Posterior vena cava (tissue), 2 donors: ENCODE measurements at regions of chr16 and their contacts with region 1.

Region 1: GRCh38 chr16:48647794-48648193 is 37.8 kb upstream of the N4BP1 start:
- DNase-seq: no peak

Region 2: GRCh38 chr16:46822270-46822669 is 1825.5 kb before region 1 on chr16:
- intact Hi-C with region 1: no loop called
- DNase-seq: no peak

Region 3: DNA sequence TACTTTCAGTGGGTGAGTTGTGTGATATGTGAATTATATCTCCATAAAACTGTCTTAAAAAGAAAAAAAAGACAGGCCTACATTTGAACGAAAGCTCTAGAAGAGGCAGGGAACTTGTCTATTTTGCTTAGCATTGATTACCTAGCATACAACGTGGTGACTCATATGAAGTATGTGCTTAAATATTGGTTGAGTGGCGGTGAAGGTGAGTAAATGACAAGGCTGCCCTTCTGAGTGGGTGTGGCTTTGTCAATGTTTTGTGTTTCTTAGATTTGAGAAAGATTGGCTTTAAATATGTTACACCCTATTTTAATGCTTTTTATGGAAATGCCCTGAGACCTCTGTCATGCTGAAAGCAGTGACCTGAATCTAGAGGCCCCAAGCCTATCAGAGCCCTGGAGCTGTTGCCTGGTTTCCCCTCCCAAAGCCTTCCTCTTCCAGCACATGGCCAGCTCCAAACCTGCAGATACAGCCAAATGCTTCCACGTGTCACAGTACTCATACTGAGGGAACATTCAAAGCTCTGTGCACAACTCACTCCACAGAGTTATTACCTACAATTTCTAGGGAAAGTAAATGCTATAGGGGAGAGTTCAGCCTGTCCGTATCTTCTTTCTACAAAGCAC is 926.7 kb before region 1 on chr16:
- intact Hi-C with region 1: loop called in 1 of 2 experiments (anchors 5 kb)
- DNase-seq: no peak

Region 4: DNA sequence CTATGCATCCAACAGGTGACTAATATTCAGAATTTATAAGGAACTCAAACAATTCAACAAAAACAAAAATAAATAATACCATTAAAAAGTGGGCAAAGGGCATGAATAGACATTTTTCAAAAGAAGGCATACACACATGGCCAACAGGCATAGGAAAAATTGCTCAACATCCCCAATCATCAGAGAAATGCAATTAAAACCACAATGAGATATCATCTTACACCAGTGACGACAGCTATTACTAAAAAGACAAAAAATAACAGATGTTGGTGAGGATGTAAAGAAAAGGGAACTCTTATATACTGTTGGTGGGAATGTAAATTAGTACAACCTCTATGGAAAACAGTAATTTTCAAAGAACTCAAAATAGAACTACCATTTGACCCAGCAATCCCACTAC is 212.5 kb after region 1 on chr16:
- intact Hi-C with region 1: no loop called
- DNase-seq: no peak

Region 5: GRCh38 chr16:49036126-49036525 is 388.3 kb after region 1 on chr16:
- intact Hi-C with region 1: loop called in 1 of 2 experiments (anchors 5 kb)
- DNase-seq: no peak